ENCODE measurements at regions of chr1 and their contacts with region 1.

Region 1: DNA sequence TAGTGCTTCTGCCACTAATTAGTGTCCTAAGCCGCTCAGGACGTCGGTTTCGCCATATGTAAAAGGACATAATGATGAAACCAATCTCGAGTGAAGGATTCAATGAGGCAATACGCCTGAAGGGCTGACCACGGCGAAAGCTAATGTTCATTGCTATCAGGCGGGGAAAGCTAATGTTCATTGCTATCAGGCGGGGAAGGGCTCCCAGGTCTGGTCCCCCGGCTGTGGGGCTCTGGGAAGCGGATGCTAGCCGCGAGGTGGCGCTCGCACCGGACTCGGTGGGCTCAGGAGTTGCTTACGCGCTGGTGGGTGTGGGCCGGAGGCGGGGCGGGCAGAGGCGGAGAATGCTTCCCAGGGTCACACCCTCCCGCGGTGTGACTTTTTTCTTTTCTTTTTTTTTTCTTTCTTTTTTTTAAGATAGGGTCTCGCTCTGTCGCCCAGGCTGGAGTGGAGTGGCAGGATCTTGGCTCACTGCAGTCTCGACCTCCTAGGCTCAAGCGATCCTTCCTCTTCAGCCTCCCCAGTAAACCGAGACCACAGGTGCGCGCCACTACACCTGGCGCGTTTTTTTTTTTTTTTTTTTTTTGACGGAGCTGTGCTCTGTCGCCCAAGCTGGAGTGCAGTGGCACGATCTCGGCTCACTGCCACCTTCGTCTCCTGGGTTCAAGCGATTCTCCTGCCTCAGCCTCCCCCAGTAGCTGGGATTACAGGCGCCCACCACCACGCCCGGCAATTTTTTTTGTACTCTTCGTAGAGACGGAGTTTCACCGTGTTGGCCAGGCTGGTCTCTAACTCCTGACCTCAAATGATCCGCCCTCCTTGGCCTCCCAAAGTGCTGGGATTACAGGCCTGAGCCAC is 1.1 kb upstream of the PEAR1 start:
- DNase-seq: peak; percentile 96
- ATAC-seq: peak; percentile 78
- H3K4me3 Mint-ChIP-seq: peak overlapping the region; percentile 72
- H3K27ac Mint-ChIP-seq: no peak overlapping the region
- H3K4me1 Mint-ChIP-seq: peaks cover 24% of the 10 kb centered on the region
- H3K27me3 Mint-ChIP-seq: peaks cover 76% of the 10 kb centered on the region
- CTCF ChIP-seq: peak; percentile 72

Region 2: GRCh38 chr1:156705918-156706656 is 186.3 kb before region 1 on chr1:
- CTCF ChIA-PET with region 1: interaction called, 16 read pairs
- POLR2A ChIA-PET with region 1: no interaction called
- DNase-seq: peak; percentile 94
- ATAC-seq: peak; percentile 45
- H3K4me3 Mint-ChIP-seq: peak overlapping the region; percentile 84
- H3K27ac Mint-ChIP-seq: peak overlapping the region; percentile 96
- H3K4me1 Mint-ChIP-seq: peaks cover 62% of the 10 kb centered on the region
- H3K27me3 Mint-ChIP-seq: peaks cover 23% of the 10 kb centered on the region
- CTCF ChIP-seq: peak; percentile 96

Region 3: DNA sequence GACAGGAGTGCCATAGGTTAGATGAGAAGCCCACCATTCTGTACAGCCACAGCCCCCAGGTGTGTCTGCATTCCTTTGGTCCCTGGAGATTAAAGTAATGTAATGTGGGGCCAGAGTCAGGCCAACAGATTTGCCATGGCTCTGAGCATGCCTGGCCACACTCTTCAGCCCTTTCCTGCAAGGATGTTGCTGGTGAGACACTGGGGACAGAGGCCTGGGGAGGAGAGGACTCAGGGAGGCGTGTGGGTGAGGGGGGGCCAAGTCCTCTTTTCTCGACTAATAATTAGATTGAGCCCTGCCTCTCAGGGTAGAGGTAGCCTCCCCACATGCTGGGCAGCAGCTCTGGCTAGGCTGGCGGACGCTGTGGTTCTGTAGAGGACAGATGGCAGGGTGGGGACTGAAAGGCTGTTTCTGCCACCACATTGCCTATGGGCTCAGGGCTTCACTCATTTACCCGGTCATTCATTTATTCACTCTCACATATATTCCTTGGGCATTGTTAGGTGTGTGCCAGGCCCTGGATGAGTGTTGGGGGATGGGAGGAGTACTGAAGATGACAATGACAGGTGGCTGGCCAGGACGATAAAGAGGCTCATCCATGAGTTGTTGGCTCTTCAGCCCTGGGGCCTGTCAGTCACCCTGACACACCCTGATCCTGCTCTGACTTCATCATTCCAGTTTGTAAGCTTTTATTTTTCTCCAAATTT is 132.2 kb before region 1 on chr1:
- CTCF ChIA-PET with region 1: no interaction called
- POLR2A ChIA-PET with region 1: no interaction called
- DNase-seq: no peak
- ATAC-seq: peak; percentile 44
- H3K4me3 Mint-ChIP-seq: no peak overlapping the region
- H3K27ac Mint-ChIP-seq: no peak overlapping the region
- H3K4me1 Mint-ChIP-seq: peaks cover 4% of the 10 kb centered on the region; the same call in 1 of the 2 replicates
- H3K27me3 Mint-ChIP-seq: no peaks in the 10 kb centered on the region
- CTCF ChIP-seq: no peak

Region 4: DNA sequence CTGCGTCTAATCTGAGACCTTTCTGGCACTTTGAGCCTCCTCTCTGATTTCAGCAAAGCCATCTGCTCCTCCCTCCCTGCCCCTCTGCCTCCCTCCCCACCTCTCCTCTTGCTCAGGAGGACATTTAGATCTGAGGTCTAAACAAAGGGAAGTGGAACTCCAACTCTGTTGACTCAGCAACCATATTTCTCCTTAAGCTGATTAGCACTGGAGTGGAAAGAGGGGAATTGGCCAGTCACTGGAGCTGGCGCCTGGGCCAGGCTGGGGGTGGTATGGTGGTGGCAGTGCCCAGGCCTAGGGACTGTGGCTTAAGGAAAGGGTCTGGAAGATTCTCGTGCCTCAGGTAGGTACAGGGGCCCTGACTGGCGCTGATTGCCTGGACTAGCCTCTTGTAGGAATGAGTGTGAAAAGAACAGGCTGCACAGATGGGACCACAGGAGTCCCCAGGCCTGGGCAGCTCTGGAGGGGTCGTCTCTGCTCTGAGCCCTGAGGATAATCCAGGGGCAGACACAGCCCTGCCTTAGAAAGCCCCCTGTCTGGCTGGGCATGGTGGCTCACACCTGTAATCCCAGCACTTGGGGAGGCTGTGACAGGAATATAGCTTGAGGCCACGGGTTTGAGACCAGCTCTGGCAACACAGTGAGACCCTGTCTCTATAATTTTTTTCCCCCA is 87.7 kb before region 1 on chr1:
- CTCF ChIA-PET with region 1: interaction called, 11 read pairs
- POLR2A ChIA-PET with region 1: interaction called, 5 read pairs
- DNase-seq: no peak
- ATAC-seq: no peak
- H3K4me3 Mint-ChIP-seq: no peak overlapping the region
- H3K27ac Mint-ChIP-seq: no peak overlapping the region
- H3K4me1 Mint-ChIP-seq: no peaks in the 10 kb centered on the region
- H3K27me3 Mint-ChIP-seq: no peaks in the 10 kb centered on the region
- CTCF ChIP-seq: no peak

Region 5: DNA sequence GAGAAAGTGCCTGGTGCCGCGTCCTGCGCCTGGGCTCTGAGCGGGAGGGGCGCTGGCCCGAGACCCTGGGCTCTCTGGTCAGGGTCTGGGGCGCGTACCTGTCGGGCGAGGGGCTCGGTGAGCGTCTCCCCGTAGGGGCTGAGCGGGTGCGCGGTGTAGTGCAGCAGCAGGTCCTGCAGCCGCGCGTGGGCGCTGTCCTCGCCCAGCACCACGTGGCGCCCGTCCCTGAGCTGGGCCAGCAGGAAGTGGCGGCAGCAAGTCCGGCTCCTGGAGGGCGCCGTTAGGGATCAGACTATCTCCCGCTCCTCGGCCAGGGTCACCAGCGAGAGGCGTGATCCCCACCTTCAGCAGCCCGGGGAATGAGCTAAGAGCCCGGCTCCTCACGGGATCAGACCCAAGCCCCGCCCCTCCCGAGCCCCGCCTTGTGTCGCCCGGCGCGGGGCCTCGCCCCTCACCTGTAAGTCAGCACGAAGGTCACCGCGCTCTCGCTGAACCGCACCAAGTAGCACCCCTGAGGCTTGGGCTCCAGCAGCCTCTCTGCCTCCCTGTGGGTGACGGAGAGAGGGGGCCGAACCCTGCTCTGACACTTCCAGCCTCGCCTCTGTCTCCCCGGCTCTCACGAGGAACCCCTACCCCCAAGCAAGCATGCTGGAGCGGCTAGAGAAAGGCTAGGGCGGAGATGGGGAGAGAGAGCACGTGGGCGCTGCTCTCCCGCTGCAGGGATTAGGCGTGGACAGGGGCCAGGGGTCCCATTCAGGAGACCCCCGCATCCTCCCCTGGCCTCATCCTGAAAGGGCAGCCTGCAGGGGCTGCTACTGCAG is 78.5 kb before region 1 on chr1:
- CTCF ChIA-PET with region 1: interaction called, 13 read pairs
- POLR2A ChIA-PET with region 1: no interaction called
- DNase-seq: peak; percentile 87
- ATAC-seq: peak; percentile 88
- H3K4me3 Mint-ChIP-seq: peak overlapping the region; percentile 62
- H3K27ac Mint-ChIP-seq: no peak overlapping the region
- H3K4me1 Mint-ChIP-seq: peaks cover 22% of the 10 kb centered on the region
- H3K27me3 Mint-ChIP-seq: peaks cover 59% of the 10 kb centered on the region
- CTCF ChIP-seq: no peak

Region 6: DNA sequence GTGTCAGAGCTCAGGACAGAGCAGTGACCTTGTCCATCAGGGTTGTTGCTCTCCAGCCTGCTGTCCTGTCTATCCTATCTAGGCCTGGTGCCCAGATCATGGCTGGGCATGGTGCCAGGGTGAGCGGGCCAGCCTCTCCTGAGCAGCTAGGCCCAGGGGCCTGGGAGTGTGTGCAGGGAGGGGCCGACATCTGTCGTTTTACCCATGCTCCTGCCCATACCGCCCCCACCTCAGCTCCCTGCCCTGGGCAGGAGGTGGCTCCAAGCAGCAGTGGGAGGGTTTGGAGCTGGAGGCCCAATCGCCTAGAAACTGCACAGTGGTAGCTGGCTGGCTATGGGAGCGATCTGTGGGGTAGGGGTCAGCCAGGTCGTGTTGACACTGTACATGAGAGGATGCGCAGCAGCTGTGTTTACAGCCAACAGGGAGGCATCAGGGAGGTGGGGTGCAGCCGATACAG is 40.0 kb before region 1 on chr1:
- CTCF ChIA-PET with region 1: interaction called, 211 read pairs
- POLR2A ChIA-PET with region 1: no interaction called
- DNase-seq: no peak
- ATAC-seq: no peak
- H3K4me3 Mint-ChIP-seq: no peak overlapping the region
- H3K27ac Mint-ChIP-seq: no peak overlapping the region
- H3K4me1 Mint-ChIP-seq: peaks cover 10% of the 10 kb centered on the region
- H3K27me3 Mint-ChIP-seq: peaks cover 89% of the 10 kb centered on the region
- CTCF ChIP-seq: no peak

Region 7: DNA sequence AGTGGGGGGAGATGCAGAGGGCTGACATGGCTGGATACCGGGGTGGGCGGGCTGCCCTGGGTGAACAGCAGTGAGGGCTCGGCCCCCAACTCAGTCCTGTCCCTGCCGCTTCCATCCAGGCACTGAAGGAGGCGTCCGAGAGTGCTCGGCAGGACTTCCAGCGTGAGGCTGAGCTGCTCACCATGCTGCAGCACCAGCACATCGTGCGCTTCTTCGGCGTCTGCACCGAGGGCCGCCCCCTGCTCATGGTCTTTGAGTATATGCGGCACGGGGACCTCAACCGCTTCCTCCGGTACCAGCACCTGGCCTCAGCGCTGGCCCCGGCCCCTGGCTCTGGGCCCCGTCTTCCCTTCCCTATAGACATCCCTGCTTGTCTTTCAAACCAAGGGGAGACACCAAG is 16.1 kb before region 1 on chr1:
- CTCF ChIA-PET with region 1: interaction called, 59 read pairs
- POLR2A ChIA-PET with region 1: interaction called, 3 read pairs
- DNase-seq: peak; percentile 76
- ATAC-seq: peak; percentile 96
- H3K4me3 Mint-ChIP-seq: peak overlapping the region; percentile 13; the same call in 1 of the 2 replicates
- H3K27ac Mint-ChIP-seq: no peak overlapping the region
- H3K4me1 Mint-ChIP-seq: peaks cover 4% of the 10 kb centered on the region
- H3K27me3 Mint-ChIP-seq: peaks cover 32% of the 10 kb centered on the region
- CTCF ChIP-seq: 0 out of 2 replicates have a peak, but pooled peaks have one; percentile 17

Region 8: DNA sequence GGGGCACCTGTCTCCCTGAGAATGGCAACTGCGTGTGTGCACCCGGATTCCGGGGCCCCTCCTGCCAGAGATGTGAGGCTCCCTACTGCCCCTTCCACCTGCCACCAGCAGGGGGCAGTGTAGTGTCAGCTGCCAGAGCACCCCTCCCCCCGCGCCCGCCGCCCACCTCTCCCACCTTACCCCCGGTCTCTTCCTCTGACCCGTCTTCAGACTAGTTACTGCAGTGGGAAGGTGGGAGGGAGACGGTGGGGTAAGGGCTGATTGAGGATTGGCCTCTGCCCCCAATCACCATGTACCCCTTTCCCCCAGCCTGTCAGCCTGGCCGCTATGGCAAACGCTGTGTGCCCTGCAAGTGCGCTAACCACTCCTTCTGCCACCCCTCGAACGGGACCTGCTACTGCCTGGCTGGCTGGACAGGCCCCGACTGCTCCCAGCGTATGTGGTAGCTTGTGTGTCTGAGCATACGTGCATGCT is 17.9 kb after region 1 on chr1:
- CTCF ChIA-PET with region 1: interaction called, 33 read pairs
- POLR2A ChIA-PET with region 1: no interaction called
- DNase-seq: peak; percentile 82
- ATAC-seq: peak; percentile 71
- H3K4me3 Mint-ChIP-seq: peak overlapping the region; percentile 67
- H3K27ac Mint-ChIP-seq: no peak overlapping the region
- H3K4me1 Mint-ChIP-seq: peaks cover 17% of the 10 kb centered on the region
- H3K27me3 Mint-ChIP-seq: peaks cover 17% of the 10 kb centered on the region
- CTCF ChIP-seq: peak; percentile 98

Region 9: DNA sequence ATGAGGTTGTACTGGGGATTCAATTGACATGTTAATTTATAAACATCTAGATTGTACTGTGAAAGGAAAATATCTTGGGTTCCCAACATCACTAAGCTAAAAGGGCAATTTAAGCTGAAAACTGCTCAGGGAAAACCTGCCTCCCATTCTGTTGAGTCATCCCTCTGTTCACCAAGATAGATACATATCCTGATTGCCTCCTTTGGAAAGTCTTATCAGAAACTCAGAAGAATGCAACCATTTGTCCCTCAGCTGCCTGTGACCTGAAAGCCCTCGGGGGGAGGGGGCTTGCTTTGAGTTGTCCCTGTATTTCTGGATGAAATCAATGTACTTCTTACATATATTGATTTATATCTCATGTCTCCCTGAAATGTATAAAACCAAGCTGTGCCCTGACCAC is 432.8 kb after region 1 on chr1:
- CTCF ChIA-PET with region 1: no interaction called
- POLR2A ChIA-PET with region 1: no interaction called
- DNase-seq: no peak
- ATAC-seq: no peak
- H3K4me3 Mint-ChIP-seq: no peak overlapping the region
- H3K27ac Mint-ChIP-seq: no peak overlapping the region
- H3K4me1 Mint-ChIP-seq: peaks cover 27% of the 10 kb centered on the region
- H3K27me3 Mint-ChIP-seq: no peaks in the 10 kb centered on the region; the same call in 1 of the 2 replicates
- CTCF ChIP-seq: no peak